Lower lobe of right lung (tissue), 2 donors: ENCODE measurements at regions of chr3 and their contacts with region 1.

Region 1: DNA sequence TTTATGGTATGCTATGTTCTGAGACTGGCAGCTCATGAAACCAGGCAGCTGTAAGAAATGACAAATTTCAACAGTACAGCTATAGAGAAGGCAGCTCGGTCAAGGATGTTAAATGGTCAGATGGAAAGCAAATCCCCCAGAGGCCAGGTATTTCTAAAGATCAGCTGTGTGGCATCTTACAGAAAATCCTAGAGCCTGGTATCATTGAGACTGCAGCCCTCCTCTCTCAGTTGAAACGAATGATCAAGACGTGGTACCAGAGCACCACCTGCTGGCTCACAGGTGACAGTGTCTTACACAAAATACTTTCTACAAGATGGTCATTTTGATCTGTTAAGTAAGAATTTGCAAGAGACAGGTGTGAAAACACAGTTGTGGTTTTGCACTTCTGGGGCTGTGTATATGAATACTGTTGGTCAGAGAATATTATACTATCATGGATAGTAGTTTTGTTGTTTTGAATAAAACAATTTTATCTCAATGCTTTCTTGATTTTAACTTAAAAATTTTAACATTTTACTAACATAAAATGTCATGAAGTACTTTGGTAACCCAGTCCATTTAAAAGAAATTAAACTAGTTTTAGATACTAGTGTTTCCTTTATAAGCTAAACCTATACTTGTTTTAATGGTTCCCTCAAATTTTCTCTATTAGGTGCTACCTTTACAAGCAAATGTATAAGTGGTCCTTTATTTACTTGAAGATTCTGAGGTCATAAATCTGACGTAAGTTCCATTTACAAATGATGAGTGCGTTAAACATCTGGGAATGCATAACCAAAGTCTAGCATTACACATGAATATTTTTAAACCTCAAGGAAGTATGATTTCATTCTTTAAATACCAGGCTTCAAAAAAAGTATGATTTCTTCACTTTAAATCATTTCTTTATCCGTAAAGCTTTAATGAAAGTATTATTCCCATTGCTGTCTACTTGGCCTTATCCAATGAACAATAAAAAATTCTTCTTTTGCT is 121.8 kb downstream of the PDZRN3 start:
- DNase-seq: no peak
- ATAC-seq: peak; percentile 82 to 83
- H3K4me3 ChIP-seq: no peak overlapping the region
- H3K27ac ChIP-seq: no peak overlapping the region
- H3K4me1 ChIP-seq: no peaks in the 10 kb centered on the region
- H3K27me3 ChIP-seq: no peaks in the 10 kb centered on the region
- CTCF ChIP-seq: peak; percentile 78

Region 2: DNA sequence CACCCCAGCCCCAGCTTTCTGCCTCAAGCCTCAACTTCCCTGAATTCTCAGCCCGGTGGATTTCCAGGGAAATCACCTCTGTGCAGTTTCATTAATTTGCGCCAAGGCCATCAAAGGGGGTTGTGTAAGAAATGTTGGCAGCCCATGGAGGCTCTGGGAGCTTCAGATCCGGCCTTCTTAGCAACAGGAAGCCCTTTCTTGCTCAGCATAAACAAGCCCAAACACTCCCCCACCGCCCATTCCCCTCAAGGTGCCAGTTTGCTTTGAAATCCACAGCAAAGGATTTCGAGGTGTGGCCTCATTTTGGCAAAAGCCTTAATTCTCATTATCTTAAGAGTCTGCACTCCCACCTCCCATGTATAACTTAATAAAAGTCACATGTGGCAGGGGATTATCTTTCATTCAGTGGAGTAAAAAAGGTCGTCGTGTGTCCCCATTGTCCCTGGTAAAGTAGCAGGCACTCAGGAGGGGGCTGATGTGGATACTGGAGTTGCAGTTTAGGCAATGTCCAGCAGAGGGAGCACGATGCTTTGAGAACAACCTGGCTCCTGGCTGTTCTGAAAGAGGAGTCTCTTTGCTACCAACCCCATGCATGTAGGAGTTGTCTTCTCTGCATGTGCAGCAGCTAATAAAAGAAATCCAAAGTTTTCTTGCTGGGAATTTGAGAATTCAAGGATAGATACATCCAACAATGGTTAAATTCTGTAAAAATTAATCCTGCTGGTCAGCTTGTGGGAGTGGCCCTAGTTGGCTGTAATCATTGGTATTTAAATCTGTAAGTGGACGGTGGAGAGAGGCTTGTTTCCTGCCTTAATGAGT is 401.9 kb before region 1 on chr3:
- intact Hi-C with region 1: loop called (anchors 10 kb)
- DNase-seq: peak; percentile 67
- ATAC-seq: peak; percentile 89 to 90
- H3K4me3 ChIP-seq: no peak overlapping the region
- H3K27ac ChIP-seq: no peak overlapping the region
- H3K4me1 ChIP-seq: no peaks in the 10 kb centered on the region
- H3K27me3 ChIP-seq: no peaks in the 10 kb centered on the region
- CTCF ChIP-seq: peak; percentile 93

Region 3: GRCh38 chr3:73448761-73449301 is 54.1 kb before region 1 on chr3:
- intact Hi-C with region 1: no loop called
- DNase-seq: no peak
- ATAC-seq: no peak
- H3K4me3 ChIP-seq: no peak overlapping the region
- H3K27ac ChIP-seq: no peak overlapping the region
- H3K4me1 ChIP-seq: peaks cover 10% of the 10 kb centered on the region
- H3K27me3 ChIP-seq: no peaks in the 10 kb centered on the region
- CTCF ChIP-seq: no peak

Region 4: DNA sequence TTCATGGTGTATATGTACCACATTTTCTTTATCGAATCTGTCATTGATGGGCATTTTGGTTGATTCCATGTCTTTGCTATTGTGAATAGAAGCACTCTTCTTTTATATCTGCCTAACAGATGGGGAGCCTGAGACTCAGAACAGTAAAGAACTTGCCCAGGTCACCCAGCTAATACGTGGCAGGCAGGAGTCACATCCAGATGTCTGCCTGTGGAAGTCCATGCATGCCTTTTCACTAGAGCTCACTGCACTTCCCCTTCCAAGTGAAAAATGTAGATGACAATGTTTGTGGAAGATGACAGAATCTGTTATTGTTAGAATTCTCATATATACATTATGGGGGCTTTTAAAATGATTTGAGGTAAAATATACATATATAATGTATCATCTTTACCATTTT is 43.2 kb before region 1 on chr3:
- intact Hi-C with region 1: loop called (anchors 5 kb)
- DNase-seq: no peak
- ATAC-seq: no peak
- H3K4me3 ChIP-seq: no peak overlapping the region
- H3K27ac ChIP-seq: no peak overlapping the region
- H3K4me1 ChIP-seq: peaks cover 6% of the 10 kb centered on the region
- H3K27me3 ChIP-seq: no peaks in the 10 kb centered on the region
- CTCF ChIP-seq: no peak

Region 5: GRCh38 chr3:73580343-73580742 is 77.4 kb after region 1 on chr3:
- intact Hi-C with region 1: no loop called
- DNase-seq: no peak
- ATAC-seq: no peak
- H3K4me3 ChIP-seq: no peak overlapping the region
- H3K27ac ChIP-seq: no peak overlapping the region
- H3K4me1 ChIP-seq: peaks cover 5% of the 10 kb centered on the region
- H3K27me3 ChIP-seq: no peaks in the 10 kb centered on the region
- CTCF ChIP-seq: no peak